ENCODE measurements at regions of chr7 and their contacts with region 1.

Region 1: DNA sequence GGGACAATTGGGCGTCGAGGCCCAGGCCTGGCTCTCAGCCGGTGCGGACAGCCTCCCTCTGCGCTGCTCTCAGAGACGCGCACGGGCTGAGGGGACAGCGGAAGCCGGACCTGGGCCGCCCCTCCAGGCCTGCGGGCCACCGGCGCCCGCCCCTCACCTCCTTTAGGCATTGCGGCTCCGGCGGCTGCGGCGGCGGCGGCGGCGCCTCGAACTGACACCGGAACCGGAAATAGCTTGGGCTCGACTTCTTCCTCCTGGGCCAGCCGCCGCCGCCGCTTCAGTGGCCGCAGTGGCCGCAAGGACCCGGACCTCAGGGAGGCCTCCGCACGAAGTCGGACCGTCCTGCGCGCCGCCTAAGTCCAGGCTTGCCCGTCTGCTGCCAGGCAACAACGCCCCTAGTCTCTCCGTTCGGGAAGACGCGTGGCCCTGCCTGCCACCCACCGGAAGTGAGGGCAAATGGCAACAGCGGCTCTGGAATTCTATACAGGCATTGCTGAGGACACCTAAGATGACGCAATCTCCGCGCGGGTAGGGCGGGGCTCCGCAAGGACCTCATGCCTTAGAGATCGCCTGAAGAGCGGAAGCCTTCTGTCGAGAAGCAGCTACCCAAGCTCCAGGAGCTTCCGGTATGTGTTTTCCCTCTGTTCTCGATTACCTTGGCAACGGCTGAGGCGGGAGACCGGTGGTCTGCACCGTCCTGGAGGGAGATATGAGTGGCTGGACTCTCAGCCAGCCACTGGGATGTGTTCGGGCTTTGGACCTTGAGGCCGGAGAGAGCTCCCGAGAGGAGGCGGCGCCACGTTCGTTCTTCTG is at the starts of genes BUD31 and PDAP1:
- DNase-seq: peak; percentile 96
- ATAC-seq: peak; percentile 85
- H3K4me3 Mint-ChIP-seq: peak within 1 kb of the TSS; percentile 96
- H3K27ac Mint-ChIP-seq: peak within 1 kb of the TSS; percentile 90
- H3K4me1 Mint-ChIP-seq: peaks cover 54% of the 10 kb centered on the region
- H3K27me3 Mint-ChIP-seq: no peaks in the 10 kb centered on the region
- total RNA-seq, gene BUD31: 116 to 138 TPM
- total RNA-seq, gene PDAP1: 94.7 to 128 TPM

Region 2: GRCh38 chr7:99184532-99185218 is 223.9 kb before region 1 on chr7:
- CTCF ChIA-PET with region 1: no interaction called
- DNase-seq: no peak
- ATAC-seq: no peak
- H3K4me3 Mint-ChIP-seq: no peak overlapping the region
- H3K27ac Mint-ChIP-seq: no peak overlapping the region
- H3K4me1 Mint-ChIP-seq: no peaks in the 10 kb centered on the region
- H3K27me3 Mint-ChIP-seq: peaks cover 9% of the 10 kb centered on the region

Region 3: DNA sequence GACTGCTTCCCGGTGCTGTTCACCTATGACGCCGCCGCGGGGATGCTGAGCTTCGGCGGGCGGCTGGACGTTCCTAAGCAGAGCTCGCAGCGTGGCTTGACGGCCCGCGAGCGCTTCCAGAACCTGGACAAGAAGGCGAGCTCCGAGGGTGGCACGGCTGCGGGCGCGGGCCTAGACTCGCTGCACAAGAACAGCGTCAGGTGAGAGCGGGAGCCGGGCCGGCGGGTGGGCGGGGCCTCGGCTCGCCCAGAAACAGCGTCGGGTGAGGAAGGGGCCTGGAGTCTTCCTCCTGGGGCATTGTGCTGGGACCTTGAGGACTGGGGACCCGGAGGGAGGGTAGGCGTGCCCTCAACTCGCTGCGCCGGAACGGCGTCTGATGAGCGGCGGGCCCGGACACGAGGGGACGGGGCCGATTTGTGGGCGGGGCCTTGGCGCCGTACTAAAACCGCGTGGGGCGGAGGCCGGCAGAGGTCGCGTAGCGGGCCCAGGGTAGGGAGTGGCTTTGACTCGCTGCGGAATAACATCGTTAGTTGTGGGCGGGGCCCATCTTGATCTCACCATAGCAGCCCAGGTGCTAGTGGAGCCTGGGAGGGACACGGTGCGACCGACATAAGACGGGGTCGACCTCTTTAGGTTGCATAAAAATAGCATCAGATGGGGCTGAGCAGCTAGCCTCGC is 15.8 kb before region 1 on chr7:
- CTCF ChIA-PET with region 1: interaction called, 17 read pairs
- DNase-seq: peak; percentile 88
- ATAC-seq: peak; percentile 92
- H3K4me3 Mint-ChIP-seq: peak overlapping the region; percentile 55
- H3K27ac Mint-ChIP-seq: peak overlapping the region; percentile 84
- H3K4me1 Mint-ChIP-seq: peaks cover 24% of the 10 kb centered on the region
- H3K27me3 Mint-ChIP-seq: no peaks in the 10 kb centered on the region